CD8-positive, alpha-beta memory T cell (primary cell): ENCODE measurements at regions of chr1 and their contacts with region 1.

Region 1: GRCh38 chr1:94805912-94806311 is 14.2 kb upstream of the SLC44A3 start:
- DNase-seq: peak; percentile 13 to 54 (median 21)
- H3K4me3 ChIP-seq: no peak overlapping the region
- H3K4me3 Mint-ChIP-seq: no peak overlapping the region
- H3K27ac ChIP-seq: no peak overlapping the region
- H3K27ac Mint-ChIP-seq: no peak overlapping the region
- H3K4me1 ChIP-seq: no peaks in the 10 kb centered on the region
- H3K4me1 Mint-ChIP-seq: peaks cover 14 to 26% (median 19%) of the 10 kb centered on the region in 3 donors
- H3K27me3 ChIP-seq: peaks cover 6% of the 10 kb centered on the region
- H3K27me3 Mint-ChIP-seq: peaks cover 4 to 22% of the 10 kb centered on the region in 2 donors

Region 2: DNA sequence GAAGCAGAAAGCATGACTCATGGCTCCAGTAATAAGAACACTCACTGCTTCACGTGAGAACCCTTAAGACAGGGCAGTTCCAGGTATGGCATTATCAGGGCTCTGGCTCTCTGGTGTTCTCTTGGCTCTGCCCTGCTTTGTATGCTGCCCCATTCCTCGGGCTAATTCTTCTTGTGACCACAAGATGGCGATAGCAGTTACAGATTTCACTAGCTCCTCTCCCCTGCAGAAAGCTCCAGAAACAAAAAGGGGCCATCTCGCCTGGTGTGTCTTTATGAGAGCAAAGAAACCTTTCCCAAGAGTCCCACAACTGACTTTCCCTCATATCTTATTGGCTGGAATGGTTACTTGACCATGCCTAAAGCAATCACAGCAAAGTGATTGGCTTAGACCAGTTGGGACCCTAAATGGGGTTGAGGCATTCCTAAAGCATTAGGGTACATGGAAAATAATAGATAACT is 324.4 kb before region 1 on chr1:
- CTCF ChIA-PET with region 1: interaction called, 31 read pairs
- POLR2A ChIA-PET with region 1: no interaction called
- DNase-seq: peak in 4 of 5 donors; percentile 7 to 48 (median 36)
- H3K4me3 ChIP-seq: no peak overlapping the region
- H3K4me3 Mint-ChIP-seq: no peak overlapping the region
- H3K27ac ChIP-seq: no peak overlapping the region
- H3K27ac Mint-ChIP-seq: peak overlapping the region in 1 of 8 donors; percentile 66
- H3K4me1 ChIP-seq: no peaks in the 10 kb centered on the region
- H3K4me1 Mint-ChIP-seq: no peaks in the 10 kb centered on the region
- H3K27me3 ChIP-seq: no peaks in the 10 kb centered on the region
- H3K27me3 Mint-ChIP-seq: no peaks in the 10 kb centered on the region

Region 3: GRCh38 chr1:94734963-94735899 is 70.7 kb before region 1 on chr1:
- CTCF ChIA-PET with region 1: no interaction called
- POLR2A ChIA-PET with region 1: no interaction called
- DNase-seq: no peak
- H3K4me3 ChIP-seq: no peak overlapping the region
- H3K4me3 Mint-ChIP-seq: no peak overlapping the region
- H3K27ac ChIP-seq: no peak overlapping the region
- H3K27ac Mint-ChIP-seq: peak overlapping the region in 1 of 8 donors; percentile 34
- H3K4me1 ChIP-seq: no peaks in the 10 kb centered on the region
- H3K4me1 Mint-ChIP-seq: no peaks in the 10 kb centered on the region
- H3K27me3 ChIP-seq: no peaks in the 10 kb centered on the region
- H3K27me3 Mint-ChIP-seq: peaks cover 18 to 38% of the 10 kb centered on the region in 2 donors

Region 4: DNA sequence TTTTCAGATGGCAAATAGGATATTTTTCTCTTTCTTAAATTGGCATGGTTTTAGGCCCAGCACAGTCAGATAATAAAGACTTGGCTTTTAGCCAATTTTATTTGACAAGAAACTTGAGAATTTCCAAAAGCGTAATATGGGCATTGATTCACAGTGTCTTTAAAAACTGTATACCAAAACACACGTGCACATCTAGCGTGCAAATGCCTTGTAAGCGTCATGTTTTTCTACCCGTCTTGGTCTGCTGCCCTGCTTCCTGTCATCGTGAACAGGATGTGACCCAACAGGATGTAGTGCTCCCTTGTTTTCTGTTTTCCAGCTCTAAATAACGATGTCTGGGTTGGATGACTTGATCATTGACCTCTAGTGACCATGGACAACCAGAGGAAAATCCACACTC is 10.5 kb before region 1 on chr1:
- CTCF ChIA-PET with region 1: interaction called, 17 read pairs
- POLR2A ChIA-PET with region 1: no interaction called
- DNase-seq: no peak
- H3K4me3 ChIP-seq: no peak overlapping the region
- H3K4me3 Mint-ChIP-seq: no peak overlapping the region
- H3K27ac ChIP-seq: no peak overlapping the region
- H3K27ac Mint-ChIP-seq: peak overlapping the region in 4 of 8 donors; percentile 24 to 67 (median 40)
- H3K4me1 ChIP-seq: no peaks in the 10 kb centered on the region
- H3K4me1 Mint-ChIP-seq: peaks cover 0 to 6% (median 4%) of the 10 kb centered on the region in 3 donors
- H3K27me3 ChIP-seq: no peaks in the 10 kb centered on the region
- H3K27me3 Mint-ChIP-seq: no peaks in the 10 kb centered on the region